ENCODE measurements at regions of chr5 and their contacts with region 1.

Region 1: DNA sequence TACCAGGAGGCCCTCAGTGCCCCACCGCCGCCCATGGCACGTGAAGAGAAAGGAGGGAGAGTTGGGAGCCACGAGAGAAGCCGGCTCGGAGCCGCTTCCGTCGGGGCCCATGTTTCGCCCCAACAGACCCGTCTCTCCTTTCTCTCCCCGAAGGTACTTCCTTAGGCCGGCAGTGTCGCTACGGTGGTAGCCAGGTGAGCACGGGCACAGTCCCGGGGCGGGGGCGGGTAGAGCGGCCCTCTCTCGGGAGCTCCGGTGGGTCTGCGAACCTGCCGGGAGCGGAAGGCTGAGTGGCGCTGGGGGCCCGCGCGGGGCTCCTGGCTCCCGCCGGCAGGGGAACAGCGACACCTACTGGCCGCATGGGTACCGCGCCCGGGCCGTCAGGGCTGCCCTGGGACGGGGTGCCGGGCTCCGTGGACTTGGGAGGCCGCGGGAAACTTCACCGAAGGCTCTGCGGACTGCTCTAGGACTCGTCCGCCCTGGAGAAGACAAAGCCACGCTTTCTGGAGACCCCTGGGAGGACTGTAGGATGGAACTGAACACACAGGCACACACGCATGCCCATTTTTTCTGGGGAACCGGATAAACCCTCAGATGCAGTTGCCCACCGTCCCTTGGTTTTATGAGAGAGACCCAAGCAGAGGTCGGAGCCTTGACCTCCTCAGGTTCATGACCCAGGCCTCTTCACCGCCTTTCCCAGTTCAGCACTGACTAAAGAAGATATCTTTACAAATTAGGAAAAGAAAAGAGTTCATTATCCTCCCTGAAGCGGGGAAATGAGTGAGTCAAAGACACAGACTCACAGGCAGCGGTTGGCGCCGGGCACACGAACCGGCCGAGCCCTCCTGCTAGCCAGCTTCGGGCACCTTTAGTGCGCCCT is 202.5 kb downstream of the MEF2C start:
- DNase-seq: no peak
- H3K4me3 ChIP-seq: peak overlapping the region; percentile 21 to 36
- H3K27ac ChIP-seq: no peak overlapping the region
- H3K4me1 ChIP-seq: peaks cover 0 to 36% (median 28%) of the 10 kb centered on the region in 4 donors
- H3K27me3 ChIP-seq: peaks cover 10 to 98% of the 10 kb centered on the region in 2 donors
- CTCF ChIP-seq: peak; percentile 77 to 93

Region 2: GRCh38 chr5:87780831-87781760 is 899.4 kb before region 1 on chr5:
- intact Hi-C with region 1: loop called (anchors 5 kb)
- DNase-seq: peak; percentile 69 to 79
- H3K4me3 ChIP-seq: no peak overlapping the region
- H3K27ac ChIP-seq: no peak overlapping the region
- H3K4me1 ChIP-seq: no peaks in the 10 kb centered on the region
- H3K27me3 ChIP-seq: peaks cover 0 to 16% of the 10 kb centered on the region in 2 donors
- CTCF ChIP-seq: peak; percentile 84 to 93

Region 3: DNA sequence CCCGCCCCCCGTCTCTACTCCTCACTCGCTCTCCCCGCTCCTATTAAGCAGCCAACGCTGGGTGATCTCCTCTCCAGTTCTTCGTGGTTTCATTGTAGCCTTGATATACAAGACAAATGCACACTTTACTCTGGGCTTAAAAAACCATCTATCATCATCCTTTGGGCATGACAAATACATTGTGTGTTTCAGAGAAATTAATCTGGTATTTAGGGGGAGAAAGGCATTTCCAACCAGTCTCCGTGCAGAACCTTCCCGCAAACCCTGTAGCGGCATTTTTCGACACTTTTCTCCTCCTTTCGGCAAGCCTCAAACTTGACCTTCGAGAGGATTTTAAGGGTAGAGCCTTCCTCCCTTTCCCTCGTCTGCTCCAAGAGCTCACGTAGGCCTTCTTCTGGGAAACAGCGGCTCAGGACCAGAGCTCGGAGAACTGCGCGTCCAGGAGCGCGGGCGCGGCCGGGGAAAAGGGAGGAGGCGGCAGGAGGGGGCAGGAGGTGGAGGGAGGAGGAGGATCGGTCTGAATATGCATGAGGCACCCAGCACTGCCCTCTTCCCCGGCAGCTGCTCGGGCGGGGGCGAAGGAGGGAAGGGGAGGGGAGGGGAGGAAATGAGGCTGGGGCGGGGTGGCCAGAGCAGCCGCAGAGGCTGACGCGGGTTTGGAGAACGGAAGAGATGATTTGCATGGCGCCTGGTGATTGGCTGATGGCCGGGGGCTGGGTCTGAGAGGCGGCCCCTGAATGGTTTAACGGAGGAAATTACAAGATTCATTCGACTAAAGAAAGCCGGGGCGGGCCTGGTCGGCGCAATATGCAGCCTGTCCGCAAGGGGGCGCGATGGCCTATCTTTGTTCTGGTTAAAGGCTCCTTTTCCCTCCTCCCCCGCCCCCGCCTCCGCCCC is 539.4 kb before region 1 on chr5:
- intact Hi-C with region 1: loop called (anchors 5 kb)
- DNase-seq: peak; percentile 97 to 99
- H3K4me3 ChIP-seq: peak overlapping the region; percentile 53 to 63
- H3K27ac ChIP-seq: peak overlapping the region; percentile 53 to 61
- H3K4me1 ChIP-seq: peaks cover 0 to 31% (median 23%) of the 10 kb centered on the region in 4 donors
- H3K27me3 ChIP-seq: peaks cover 0 to 3% of the 10 kb centered on the region in 2 donors
- CTCF ChIP-seq: peak; percentile 60 to 74

Measured in tibial artery (tissue), 4 donors.